MCF 10A (cell line): ENCODE measurements at regions of chr4 and their contacts with region 1.

Region 1: DNA sequence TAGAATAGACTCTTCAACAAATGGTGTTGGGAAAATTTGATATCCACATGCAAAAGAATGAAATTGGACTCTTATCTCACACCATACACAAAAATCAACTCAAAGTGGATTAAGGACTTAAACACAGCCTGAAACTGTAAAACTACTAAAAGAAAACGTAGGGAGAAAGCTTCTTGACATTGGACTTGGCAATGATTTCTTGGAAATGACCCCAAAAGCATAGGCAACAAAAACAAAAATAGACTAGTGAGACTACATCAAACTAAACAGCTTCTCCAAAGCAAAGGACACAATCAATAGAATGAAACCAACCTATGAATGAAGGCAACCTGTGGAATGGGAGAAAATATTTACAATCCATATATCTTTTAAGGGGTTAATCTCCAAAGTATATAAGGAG is 94.7 kb upstream of the INTU start:
- DNase-seq: no peak
- H3K4me3 Mint-ChIP-seq: no peak overlapping the region
- H3K27ac Mint-ChIP-seq: no peak overlapping the region
- H3K4me1 Mint-ChIP-seq: no peaks in the 10 kb centered on the region
- H3K27me3 Mint-ChIP-seq: no peaks in the 10 kb centered on the region
- CTCF ChIP-seq: no peak

Region 2: GRCh38 chr4:127196655-127197352 is 341.2 kb before region 1 on chr4:
- CTCF ChIA-PET with region 1: no interaction called
- POLR2A ChIA-PET with region 1: no interaction called
- intact Hi-C with region 1: loop called (anchors 5 kb)
- DNase-seq: no peak
- H3K4me3 Mint-ChIP-seq: no peak overlapping the region
- H3K27ac Mint-ChIP-seq: no peak overlapping the region
- H3K4me1 Mint-ChIP-seq: no peaks in the 10 kb centered on the region
- H3K27me3 Mint-ChIP-seq: no peaks in the 10 kb centered on the region
- CTCF ChIP-seq: no peak

Region 3: DNA sequence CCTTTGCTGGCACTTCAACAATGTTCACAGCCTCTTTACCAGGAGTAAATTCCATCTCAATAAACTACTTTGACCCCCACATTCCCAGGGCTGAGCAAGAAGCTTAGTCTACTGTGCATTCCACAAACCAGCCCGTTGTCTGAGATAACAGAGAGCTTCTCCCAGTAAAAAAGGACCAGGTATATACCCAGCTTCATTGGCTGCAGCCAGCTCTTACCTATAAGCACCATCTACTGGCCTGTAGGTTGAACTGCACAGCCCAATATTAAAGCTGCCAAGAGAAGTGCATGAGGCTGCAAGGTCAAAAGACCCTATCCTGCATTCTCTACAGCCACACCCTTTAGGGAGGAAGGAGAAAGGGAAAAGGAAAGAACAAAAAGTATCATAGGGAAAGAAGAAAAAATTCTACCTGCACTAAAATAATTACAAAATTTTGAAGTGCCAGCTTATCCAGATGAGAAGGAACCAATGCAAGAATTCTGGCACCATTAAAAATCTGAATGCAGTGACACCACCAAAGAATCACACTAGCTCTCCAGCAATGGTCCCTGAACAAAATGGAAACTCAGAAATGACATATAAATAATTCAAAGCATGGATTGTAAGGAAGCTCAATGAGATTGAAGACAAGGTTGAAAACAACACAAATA is 49.0 kb after region 1 on chr4:
- CTCF ChIA-PET with region 1: interaction called, 11 read pairs
- POLR2A ChIA-PET with region 1: no interaction called
- intact Hi-C with region 1: loop called (anchors 1 kb)
- DNase-seq: peak; percentile 67
- H3K4me3 Mint-ChIP-seq: no peak overlapping the region
- H3K27ac Mint-ChIP-seq: no peak overlapping the region
- H3K4me1 Mint-ChIP-seq: no peaks in the 10 kb centered on the region
- H3K27me3 Mint-ChIP-seq: no peaks in the 10 kb centered on the region
- CTCF ChIP-seq: peak; percentile 74